ENCODE measurements at regions of chr9 and their contacts with region 1.

Region 1: DNA sequence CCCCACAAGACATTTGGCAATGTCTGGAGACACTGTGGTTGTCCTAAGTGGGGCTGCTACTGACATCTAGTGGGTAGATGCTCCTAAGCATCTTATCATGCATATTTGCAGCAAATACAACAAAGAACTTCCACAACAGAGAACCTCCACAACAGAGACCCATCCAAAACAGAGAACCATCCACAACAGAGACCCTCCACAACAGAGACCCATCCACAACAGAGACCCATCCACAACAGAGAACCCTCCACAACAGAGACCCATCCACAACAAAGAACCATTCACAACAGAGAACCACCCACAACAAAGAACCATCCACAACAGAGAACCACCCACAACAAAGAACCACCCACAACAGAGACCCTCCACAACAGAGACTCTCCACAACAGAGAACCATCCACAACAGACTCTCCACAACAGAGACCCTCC is 32.8 kb downstream of the ARPC5L start:
- DNase-seq: no peak
- ATAC-seq: peak in 2 of 4 donors; percentile 36 to 60
- H3K4me3 ChIP-seq: no peak overlapping the region
- H3K27ac ChIP-seq: no peak overlapping the region
- H3K4me1 ChIP-seq: no peaks in the 10 kb centered on the region
- H3K27me3 ChIP-seq: no peaks in the 10 kb centered on the region
- CTCF ChIP-seq: peak in 9 of 12 donors; percentile 5 to 49 (median 43)
- POLR2A ChIP-seq: no peak

Region 2: DNA sequence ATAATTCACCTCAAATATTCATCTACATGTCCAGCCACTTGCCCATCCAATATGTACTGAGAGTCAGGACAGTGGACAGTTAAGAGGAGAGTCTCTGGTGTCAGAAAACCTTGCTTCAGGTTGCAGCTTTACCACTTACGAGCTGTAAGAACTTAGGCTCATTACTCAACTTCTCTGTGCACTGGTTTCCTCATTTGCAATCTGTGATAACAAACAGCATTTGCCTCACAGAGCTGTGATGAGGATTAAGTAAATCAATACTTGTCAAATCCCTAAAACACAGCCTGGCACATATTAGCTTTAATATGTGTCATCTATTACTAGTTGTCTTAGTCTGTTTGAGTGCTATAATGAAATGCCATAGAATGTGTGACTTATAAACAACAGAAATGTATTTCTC is 37.6 kb after region 1 on chr9:
- intact Hi-C with region 1: loop called in 1 of 10 experiments (anchors 2 kb)
- DNase-seq: no peak
- ATAC-seq: no peak
- H3K4me3 ChIP-seq: no peak overlapping the region
- H3K27ac ChIP-seq: no peak overlapping the region
- H3K4me1 ChIP-seq: no peaks in the 10 kb centered on the region
- H3K27me3 ChIP-seq: no peaks in the 10 kb centered on the region
- CTCF ChIP-seq: no peak
- POLR2A ChIP-seq: no peak

Measured in heart left ventricle (tissue), 16 donors.